Head of caudate nucleus (tissue), 42 donors: ENCODE measurements at regions of chr19 and their contacts with region 1.

Region 1: GRCh38 chr19:38647368-38647965 is at the start of gene ACTN4:
- DNase-seq: peak; percentile 94 to 100 (median 98)

Region 2: GRCh38 chr19:38711726-38712153 is 64.3 kb after region 1 on chr19:
- intact Hi-C with region 1: loop called (anchors 5 kb)
- DNase-seq: no peak

Region 3: GRCh38 chr19:38929929-38930775 is 282.7 kb after region 1 on chr19 and contains the start of gene SARS2:
- intact Hi-C with region 1: loop called (anchors 10 kb)
- DNase-seq: peak; percentile 83 to 96 (median 92)